ENCODE measurements at regions of chr14 and their contacts with region 1.

Region 1: DNA sequence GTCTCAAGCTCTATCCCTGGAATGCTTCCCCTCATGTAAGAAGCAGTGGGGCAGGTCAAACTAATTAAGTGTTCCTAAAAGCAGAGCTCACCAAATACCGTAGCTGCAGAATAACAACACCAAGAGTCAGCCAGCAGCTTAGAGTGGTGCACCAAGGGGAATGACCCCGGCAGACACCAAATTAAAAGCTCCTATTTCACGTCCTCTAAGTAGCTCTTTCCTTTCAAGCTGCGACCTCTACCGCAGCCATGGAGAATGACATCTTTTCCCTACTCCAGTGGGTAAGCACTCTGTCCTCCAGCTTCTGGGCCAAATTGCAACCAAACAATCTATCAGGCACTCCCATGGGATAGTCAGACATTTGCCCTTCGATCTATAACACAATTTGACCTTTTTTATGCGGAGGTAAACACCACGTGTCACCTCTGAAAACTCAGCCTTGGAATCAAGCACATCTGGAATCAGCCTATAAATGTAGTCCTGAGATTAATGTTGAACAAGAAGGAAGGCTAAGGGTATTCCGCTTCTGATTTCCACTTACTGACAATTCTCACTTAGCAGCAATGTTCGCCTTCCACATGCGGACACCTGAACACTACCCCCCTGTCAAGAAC is 67.6 kb upstream of the CDKN3 start:
- DNase-seq: peak; percentile 63
- H3K27ac ChIP-seq: no peak overlapping the region
- CTCF ChIP-seq: peak; percentile 76

Region 2: GRCh38 chr14:54175298-54175942 is 153.8 kb before region 1 on chr14:
- CTCF ChIA-PET with region 1: interaction called, 13 read pairs
- POLR2A ChIA-PET with region 1: no interaction called
- DNase-seq: peak; percentile 64
- H3K27ac ChIP-seq: no peak overlapping the region
- CTCF ChIP-seq: peak; percentile 81

Region 3: GRCh38 chr14:54312140-54312801 is 16.9 kb before region 1 on chr14:
- CTCF ChIA-PET with region 1: interaction called, 11 read pairs
- POLR2A ChIA-PET with region 1: no interaction called
- DNase-seq: peak; percentile 89
- H3K27ac ChIP-seq: peak overlapping the region; percentile 93
- CTCF ChIP-seq: no peak

Measured in RWPE1 (cell line).